HCT116 (cell line): ENCODE measurements at regions of chr9 and their contacts with region 1.

Region 1: GRCh38 chr9:35882263-35882848 is 12.2 kb upstream of the OR13J1 start:
- DNase-seq: peak; percentile 71
- ATAC-seq: peak; percentile 95
- H3K4me3 ChIP-seq: no peak overlapping the region
- H3K27ac ChIP-seq: no peak overlapping the region
- H3K4me1 ChIP-seq: peaks cover 0 to 3% of the 10 kb centered on the region in 2 experiments; a peak in 1 of 4 replicates
- H3K27me3 ChIP-seq: no peaks in the 10 kb centered on the region
- CTCF ChIP-seq: peak; percentile 93 to 99 (median 97)
- POLR2A ChIP-seq: no peak
- RAD21 ChIP-seq: peak; percentile 88

Region 2: GRCh38 chr9:35826071-35826701 is 56.2 kb before region 1 on chr9:
- CTCF ChIA-PET with region 1: interaction called, 30 read pairs
- POLR2A ChIA-PET with region 1: no interaction called
- RAD21 ChIA-PET with region 1: interaction called, 3 to 11 read pairs
- intact Hi-C with region 1: loop called (anchors 1 kb)
- DNase-seq: peak; percentile 44
- ATAC-seq: peak; percentile 60
- H3K4me3 ChIP-seq: no peak overlapping the region
- H3K27ac ChIP-seq: peak overlapping the region; percentile 5; the same call in 1 of the 2 replicates
- H3K4me1 ChIP-seq: peaks cover 3 to 20% of the 10 kb centered on the region in 2 experiments; a peak in 3 of 4 replicates
- H3K27me3 ChIP-seq: no peaks in the 10 kb centered on the region
- CTCF ChIP-seq: peak; percentile 83 to 95 (median 89)
- POLR2A ChIP-seq: no peak
- RAD21 ChIP-seq: peak; percentile 72

Region 3: GRCh38 chr9:35835216-35835632 is 47.1 kb before region 1 on chr9:
- CTCF ChIA-PET with region 1: interaction called, 12 read pairs
- POLR2A ChIA-PET with region 1: no interaction called
- RAD21 ChIA-PET with region 1: no interaction called
- intact Hi-C with region 1: no loop called
- DNase-seq: no peak
- ATAC-seq: peak; percentile 87
- H3K4me3 ChIP-seq: no peak overlapping the region
- H3K27ac ChIP-seq: no peak overlapping the region
- H3K4me1 ChIP-seq: peaks cover 0 to 11% of the 10 kb centered on the region in 2 experiments; a peak in 1 of 4 replicates
- H3K27me3 ChIP-seq: no peaks in the 10 kb centered on the region
- CTCF ChIP-seq: peak; percentile 22 to 54 (median 48); a peak in 5 of 6 replicates
- POLR2A ChIP-seq: no peak
- RAD21 ChIP-seq: no peak; the same call in 1 of the 2 replicates

Region 4: GRCh38 chr9:35903049-35903448 is 20.7 kb after region 1 on chr9:
- CTCF ChIA-PET with region 1: interaction called, 50 read pairs
- POLR2A ChIA-PET with region 1: no interaction called
- RAD21 ChIA-PET with region 1: interaction called in 1 of 2 experiments, 4 read pairs
- intact Hi-C with region 1: no loop called
- DNase-seq: peak; percentile 48
- ATAC-seq: peak; percentile 35; the same call in 1 of the 2 replicates
- H3K4me3 ChIP-seq: no peak overlapping the region
- H3K27ac ChIP-seq: no peak overlapping the region
- H3K4me1 ChIP-seq: peaks cover 32 to 44% of the 10 kb centered on the region in 2 experiments
- H3K27me3 ChIP-seq: no peaks in the 10 kb centered on the region
- CTCF ChIP-seq: peak in 2 of 3 experiments; percentile 51 to 78; a peak in 4 of 6 replicates
- POLR2A ChIP-seq: no peak
- RAD21 ChIP-seq: no peak

Region 5: GRCh38 chr9:36102742-36103495 is 220.6 kb after region 1 on chr9:
- CTCF ChIA-PET with region 1: no interaction called
- POLR2A ChIA-PET with region 1: no interaction called
- RAD21 ChIA-PET with region 1: no interaction called
- intact Hi-C with region 1: no loop called
- DNase-seq: peak; percentile 57
- ATAC-seq: peak; percentile 97
- H3K4me3 ChIP-seq: no peak overlapping the region
- H3K27ac ChIP-seq: no peak overlapping the region
- H3K4me1 ChIP-seq: peaks cover 0 to 24% of the 10 kb centered on the region in 2 experiments; a peak in 2 of 4 replicates
- H3K27me3 ChIP-seq: no peaks in the 10 kb centered on the region
- CTCF ChIP-seq: peak; percentile 76 to 93 (median 90)
- POLR2A ChIP-seq: no peak
- RAD21 ChIP-seq: peak; percentile 71